ENCODE measurements at regions of chr9 and their contacts with region 1.

Region 1: DNA sequence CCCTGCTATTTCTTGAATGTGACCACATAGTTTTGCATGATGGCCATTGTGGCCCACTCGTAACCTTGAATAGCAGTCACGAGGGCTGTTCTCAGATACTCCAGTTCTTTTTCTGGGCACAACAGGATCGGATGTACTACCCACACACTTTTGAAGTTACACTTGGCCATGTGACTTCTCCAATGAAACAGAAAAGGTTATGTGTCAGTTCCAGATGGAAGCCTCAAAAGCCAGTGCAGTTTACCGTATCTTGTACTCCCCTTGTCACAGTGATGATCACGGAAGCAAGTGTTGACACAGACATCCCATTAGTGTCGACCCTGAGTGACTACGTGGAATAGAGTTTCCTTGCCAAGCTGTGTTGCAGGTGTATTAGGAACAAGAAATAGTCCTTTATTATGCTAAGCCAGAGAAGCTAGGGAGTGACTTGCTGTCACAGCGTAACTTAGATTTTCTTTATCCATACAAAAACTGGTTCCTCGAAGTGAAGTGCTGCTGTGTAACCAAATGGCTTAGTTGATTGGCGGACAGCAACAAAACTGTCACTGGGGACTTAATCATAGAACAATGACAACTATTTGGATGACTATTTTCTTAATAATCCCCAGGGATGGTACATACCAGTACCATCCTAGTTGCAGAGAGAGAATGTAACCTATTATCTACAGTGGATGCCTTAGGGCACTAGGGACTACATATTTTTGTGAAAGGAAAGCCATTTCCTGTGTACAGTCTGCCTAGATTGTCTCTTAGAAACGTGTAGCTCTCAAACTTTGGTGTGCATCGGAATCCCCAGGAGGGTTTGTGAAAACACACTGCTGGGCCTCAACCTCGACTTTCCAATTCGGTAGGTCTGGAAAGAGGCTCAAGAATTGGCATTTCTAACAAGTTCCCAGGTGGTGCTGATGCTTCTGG is 90.1 kb upstream of the DMRT1 start:
- DNase-seq: peak; percentile 15
- ATAC-seq: peak; percentile 40
- H3K4me3 ChIP-seq: no peak overlapping the region
- H3K27ac ChIP-seq: peak overlapping the region; percentile 87
- H3K4me1 ChIP-seq: peaks cover 20% of the 10 kb centered on the region
- H3K27me3 ChIP-seq: no peaks in the 10 kb centered on the region
- CTCF ChIP-seq: no peak
- POLR2A ChIP-seq: no peak
- RAD21 ChIP-seq: no peak

Region 2: GRCh38 chr9:214648-215493 is 536.5 kb before region 1 on chr9 and contains the start of gene DOCK8:
- CTCF ChIA-PET with region 1: no interaction called
- POLR2A ChIA-PET with region 1: no interaction called
- dilution Hi-C with region 1: no loop called
- in situ Hi-C with region 1: no loop called
- intact Hi-C with region 1: no loop called
- DNase-seq: no peak
- ATAC-seq: peak; percentile 80
- H3K4me3 ChIP-seq: peak within 1 kb of the TSS; percentile 28
- H3K27ac ChIP-seq: no peak within 1 kb of the TSS
- H3K4me1 ChIP-seq: no peaks in the 10 kb centered on the region
- H3K27me3 ChIP-seq: peaks cover 28% of the 10 kb centered on the region
- CTCF ChIP-seq: no peak
- POLR2A ChIP-seq: no peak
- RAD21 ChIP-seq: no peak
- total RNA-seq, gene DOCK8: not detected in 2 replicates

Region 3: DNA sequence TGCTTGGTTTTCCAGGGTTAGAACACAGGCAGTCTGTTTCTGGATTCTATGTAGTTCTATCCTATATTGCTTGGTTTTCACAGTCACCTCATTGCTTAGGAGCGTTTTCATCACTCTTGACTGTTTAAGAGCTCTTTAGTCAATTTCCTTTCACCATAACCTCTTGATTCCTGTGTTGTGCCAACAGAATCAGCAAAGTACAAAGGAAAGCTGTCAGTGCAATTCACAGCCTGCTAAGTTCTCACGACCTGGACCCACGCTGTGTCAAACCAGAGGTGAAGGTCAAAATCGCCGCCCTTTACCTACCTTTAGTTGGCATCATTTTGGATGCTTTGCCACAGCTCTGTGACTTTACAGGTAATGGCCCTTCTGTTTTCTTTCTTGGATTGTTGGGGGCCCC is 336.8 kb before region 1 on chr9:
- CTCF ChIA-PET with region 1: interaction called, 10 read pairs
- POLR2A ChIA-PET with region 1: no interaction called
- dilution Hi-C with region 1: no loop called
- in situ Hi-C with region 1: no loop called
- intact Hi-C with region 1: no loop called
- DNase-seq: no peak
- ATAC-seq: no peak
- H3K4me3 ChIP-seq: no peak overlapping the region
- H3K27ac ChIP-seq: no peak overlapping the region
- H3K4me1 ChIP-seq: no peaks in the 10 kb centered on the region
- H3K27me3 ChIP-seq: no peaks in the 10 kb centered on the region
- CTCF ChIP-seq: no peak
- POLR2A ChIP-seq: no peak
- RAD21 ChIP-seq: no peak

Region 4: DNA sequence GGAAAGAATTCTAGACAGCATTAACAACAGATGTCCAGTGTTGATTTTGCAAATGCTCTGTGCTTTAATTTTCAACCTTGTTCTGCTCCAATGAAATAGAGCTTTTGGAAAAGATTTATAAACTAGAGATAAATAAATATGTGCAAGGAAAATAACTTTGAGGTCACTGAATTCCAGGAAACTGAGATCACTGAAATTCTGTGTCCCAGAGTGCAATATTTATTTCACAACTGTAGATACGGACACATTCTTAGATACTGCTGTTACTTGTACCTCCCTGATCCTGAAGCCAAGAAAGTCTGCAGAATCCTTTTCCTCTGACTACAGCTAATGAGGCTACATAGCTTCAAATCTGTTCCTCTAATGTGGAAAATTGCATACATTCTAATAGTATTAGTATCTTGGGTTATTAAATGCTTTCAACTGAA is 313.8 kb before region 1 on chr9:
- CTCF ChIA-PET with region 1: no interaction called
- POLR2A ChIA-PET with region 1: no interaction called
- dilution Hi-C with region 1: no loop called
- in situ Hi-C with region 1: no loop called
- intact Hi-C with region 1: loop called (anchors 5 kb)
- DNase-seq: peak; percentile 77
- ATAC-seq: peak; percentile 83
- H3K4me3 ChIP-seq: no peak overlapping the region
- H3K27ac ChIP-seq: peak overlapping the region; percentile 98; the same call in 1 of the 2 replicates
- H3K4me1 ChIP-seq: peaks cover 13% of the 10 kb centered on the region
- H3K27me3 ChIP-seq: peaks cover 4% of the 10 kb centered on the region
- CTCF ChIP-seq: no peak
- POLR2A ChIP-seq: no peak
- RAD21 ChIP-seq: no peak

Region 5: DNA sequence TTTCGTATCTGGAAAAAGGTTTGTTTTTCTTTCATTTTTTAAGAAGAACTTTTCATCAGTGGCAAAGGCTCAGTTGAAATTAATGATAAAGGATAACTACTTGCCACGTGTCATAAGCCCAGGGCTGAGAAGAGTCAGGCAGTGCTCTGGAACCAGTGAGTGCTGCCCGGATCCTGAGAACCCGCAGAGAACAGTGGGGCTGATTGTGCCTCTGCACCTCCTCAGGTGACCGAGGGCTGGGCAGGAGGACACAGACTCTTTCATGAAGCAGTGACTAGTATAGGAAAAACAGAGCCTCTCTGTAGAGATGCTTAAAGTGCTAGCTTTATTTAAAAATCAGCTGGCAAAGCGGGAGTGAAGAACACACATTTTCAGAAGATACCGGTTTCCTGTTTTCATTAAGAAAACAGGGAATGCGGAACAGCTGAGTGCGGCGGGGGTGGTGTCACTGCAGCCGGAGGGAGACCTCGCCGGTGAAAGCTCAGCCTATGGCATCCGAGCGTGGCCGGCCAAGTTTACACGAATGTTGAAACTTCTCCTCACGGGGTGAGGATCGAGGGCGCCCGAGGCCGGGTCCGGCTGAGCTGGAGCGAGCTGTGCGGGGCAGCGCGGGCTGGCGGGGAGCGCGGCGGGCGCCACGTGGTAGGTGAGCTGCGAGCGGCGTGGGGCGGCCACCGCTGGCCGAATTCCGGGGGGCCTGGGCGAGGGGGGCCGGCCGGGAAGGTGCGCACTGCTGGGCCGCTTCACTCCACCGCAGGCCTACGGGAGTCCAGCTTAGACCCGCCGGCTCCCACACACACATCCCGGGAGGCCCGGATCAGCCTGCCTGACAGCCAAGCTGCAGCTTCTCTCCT is 44.6 kb before region 1 on chr9:
- CTCF ChIA-PET with region 1: no interaction called
- POLR2A ChIA-PET with region 1: no interaction called
- dilution Hi-C with region 1: no loop called
- in situ Hi-C with region 1: no loop called
- intact Hi-C with region 1: no loop called
- DNase-seq: peak; percentile 75
- ATAC-seq: peak; percentile 92
- H3K4me3 ChIP-seq: peak overlapping the region; percentile 58
- H3K27ac ChIP-seq: peak overlapping the region; percentile 98
- H3K4me1 ChIP-seq: peaks cover 8% of the 10 kb centered on the region
- H3K27me3 ChIP-seq: no peaks in the 10 kb centered on the region
- CTCF ChIP-seq: no peak
- POLR2A ChIP-seq: no peak
- RAD21 ChIP-seq: no peak; the same call in 1 of the 2 replicates

Region 6: DNA sequence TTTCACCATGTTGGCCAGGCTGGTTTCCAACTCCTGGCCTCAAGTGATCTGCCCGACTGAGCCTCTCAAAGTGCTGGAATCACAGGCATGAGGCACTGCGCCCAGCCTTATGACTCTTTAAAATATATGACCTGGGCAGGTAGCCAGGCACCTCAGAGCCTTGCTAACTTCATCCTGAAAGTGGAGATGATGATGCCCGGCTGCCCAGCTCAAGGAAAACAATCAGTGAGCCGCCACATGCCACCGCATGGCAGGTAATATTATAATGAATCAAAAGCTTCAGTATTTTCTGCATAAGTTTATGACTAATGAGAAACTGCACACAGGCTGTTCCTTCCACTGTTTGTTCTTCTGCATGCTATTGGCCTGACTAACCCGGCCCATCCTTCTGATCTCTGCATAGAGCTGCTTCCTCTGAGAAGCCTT is 59.7 kb after region 1 on chr9:
- CTCF ChIA-PET with region 1: no interaction called
- POLR2A ChIA-PET with region 1: no interaction called
- dilution Hi-C with region 1: no loop called
- in situ Hi-C with region 1: no loop called
- intact Hi-C with region 1: no loop called
- DNase-seq: peak; percentile 60
- ATAC-seq: peak; percentile 84
- H3K4me3 ChIP-seq: no peak overlapping the region
- H3K27ac ChIP-seq: no peak overlapping the region
- H3K4me1 ChIP-seq: no peaks in the 10 kb centered on the region
- H3K27me3 ChIP-seq: no peaks in the 10 kb centered on the region
- CTCF ChIP-seq: no peak
- POLR2A ChIP-seq: no peak
- RAD21 ChIP-seq: no peak

Region 7: GRCh38 chr9:1320607-1321195 is 569.3 kb after region 1 on chr9:
- CTCF ChIA-PET with region 1: no interaction called
- POLR2A ChIA-PET with region 1: no interaction called
- dilution Hi-C with region 1: no loop called
- in situ Hi-C with region 1: no loop called
- intact Hi-C with region 1: no loop called
- DNase-seq: no peak
- ATAC-seq: no peak
- H3K4me3 ChIP-seq: no peak overlapping the region
- H3K27ac ChIP-seq: no peak overlapping the region
- H3K4me1 ChIP-seq: no peaks in the 10 kb centered on the region
- H3K27me3 ChIP-seq: no peaks in the 10 kb centered on the region
- CTCF ChIP-seq: no peak
- POLR2A ChIP-seq: no peak
- RAD21 ChIP-seq: no peak

Measured in IMR-90 (cell line).